MCF 10A (cell line): ENCODE measurements at regions of chrX and their contacts with region 1.

Region 1: GRCh38 chrX:11499076-11500044 is 166.4 kb downstream of the ARHGAP6 start:
- DNase-seq: peak; percentile 44
- H3K4me3 Mint-ChIP-seq: no peak overlapping the region
- H3K27ac Mint-ChIP-seq: no peak overlapping the region
- H3K4me1 Mint-ChIP-seq: no peaks in the 10 kb centered on the region
- H3K27me3 Mint-ChIP-seq: peaks cover 13% of the 10 kb centered on the region
- CTCF ChIP-seq: no peak

Region 2: DNA sequence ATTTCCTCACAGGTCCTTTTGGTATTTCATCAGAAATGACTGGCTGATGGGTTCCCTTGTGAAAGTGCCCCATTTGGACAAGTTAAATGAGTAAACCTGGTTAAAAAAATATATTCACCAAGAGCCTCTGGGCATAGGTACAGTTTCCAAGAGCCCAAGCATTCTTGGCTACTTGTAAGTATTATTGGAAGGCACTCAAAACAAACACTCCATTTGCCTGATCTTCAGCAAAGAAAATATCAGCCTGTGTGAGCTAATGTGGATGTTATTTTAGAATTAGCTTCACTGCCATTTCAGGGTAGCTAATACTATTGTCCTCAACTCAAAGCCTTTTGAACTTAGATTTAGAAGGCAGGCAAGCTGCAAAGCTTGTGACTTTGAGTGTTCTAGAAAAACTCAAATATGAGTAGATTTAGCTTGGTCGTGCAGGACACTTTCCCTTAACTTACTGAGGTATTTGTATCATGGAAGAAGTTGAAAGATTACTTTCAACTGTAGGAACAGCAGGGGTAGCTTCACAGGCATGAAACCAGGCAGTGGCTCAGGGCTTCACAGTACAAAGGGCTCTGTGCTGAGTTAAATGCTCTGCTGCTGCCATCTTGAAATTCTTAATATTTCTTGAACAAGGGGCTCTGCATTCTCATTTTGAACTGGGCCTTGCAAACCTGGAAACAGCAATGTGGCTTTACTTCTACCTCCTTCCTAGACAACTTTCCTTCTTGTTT is 28.9 kb before region 1 on chrX:
- CTCF ChIA-PET with region 1: interaction called, 4 read pairs
- POLR2A ChIA-PET with region 1: no interaction called
- intact Hi-C with region 1: loop called (anchors 2 kb)
- DNase-seq: peak; percentile 90
- H3K4me3 Mint-ChIP-seq: no peak overlapping the region
- H3K27ac Mint-ChIP-seq: peak overlapping the region; percentile 78
- H3K4me1 Mint-ChIP-seq: peaks cover 5% of the 10 kb centered on the region
- H3K27me3 Mint-ChIP-seq: peaks cover 18% of the 10 kb centered on the region
- CTCF ChIP-seq: no peak